CD8-positive, alpha-beta memory T cell (primary cell): ENCODE measurements at regions of chr2 and their contacts with region 1.

Region 1: GRCh38 chr2:177263451-177264208 is 897 bp downstream of the NFE2L2 start:
- DNase-seq: peak; percentile 93 to 96 (median 94)
- H3K4me3 ChIP-seq: peak overlapping the region; percentile 85
- H3K4me3 Mint-ChIP-seq: peak overlapping the region; percentile 89 to 99 (median 95)
- H3K27ac ChIP-seq: peak overlapping the region; percentile 99
- H3K27ac Mint-ChIP-seq: peak overlapping the region; percentile 95 to 100 (median 99)
- H3K4me1 ChIP-seq: peaks cover 47% of the 10 kb centered on the region
- H3K4me1 Mint-ChIP-seq: peaks cover 49 to 64% (median 57%) of the 10 kb centered on the region in 3 donors
- H3K27me3 ChIP-seq: no peaks in the 10 kb centered on the region
- H3K27me3 Mint-ChIP-seq: peaks cover 0 to 1% of the 10 kb centered on the region in 2 donors

Region 2: GRCh38 chr2:177164584-177165052 is 99.0 kb before region 1 on chr2:
- CTCF ChIA-PET with region 1: interaction called, 113 read pairs
- POLR2A ChIA-PET with region 1: interaction called, 84 read pairs
- DNase-seq: peak; percentile 65 to 85 (median 72)
- H3K4me3 ChIP-seq: peak overlapping the region; percentile 47
- H3K4me3 Mint-ChIP-seq: no peak overlapping the region
- H3K27ac ChIP-seq: peak overlapping the region; percentile 32
- H3K27ac Mint-ChIP-seq: no peak overlapping the region
- H3K4me1 ChIP-seq: peaks cover 18% of the 10 kb centered on the region
- H3K4me1 Mint-ChIP-seq: peaks cover 6 to 16% (median 16%) of the 10 kb centered on the region in 3 donors
- H3K27me3 ChIP-seq: no peaks in the 10 kb centered on the region
- H3K27me3 Mint-ChIP-seq: peaks cover 0 to 2% of the 10 kb centered on the region in 2 donors

Region 3: DNA sequence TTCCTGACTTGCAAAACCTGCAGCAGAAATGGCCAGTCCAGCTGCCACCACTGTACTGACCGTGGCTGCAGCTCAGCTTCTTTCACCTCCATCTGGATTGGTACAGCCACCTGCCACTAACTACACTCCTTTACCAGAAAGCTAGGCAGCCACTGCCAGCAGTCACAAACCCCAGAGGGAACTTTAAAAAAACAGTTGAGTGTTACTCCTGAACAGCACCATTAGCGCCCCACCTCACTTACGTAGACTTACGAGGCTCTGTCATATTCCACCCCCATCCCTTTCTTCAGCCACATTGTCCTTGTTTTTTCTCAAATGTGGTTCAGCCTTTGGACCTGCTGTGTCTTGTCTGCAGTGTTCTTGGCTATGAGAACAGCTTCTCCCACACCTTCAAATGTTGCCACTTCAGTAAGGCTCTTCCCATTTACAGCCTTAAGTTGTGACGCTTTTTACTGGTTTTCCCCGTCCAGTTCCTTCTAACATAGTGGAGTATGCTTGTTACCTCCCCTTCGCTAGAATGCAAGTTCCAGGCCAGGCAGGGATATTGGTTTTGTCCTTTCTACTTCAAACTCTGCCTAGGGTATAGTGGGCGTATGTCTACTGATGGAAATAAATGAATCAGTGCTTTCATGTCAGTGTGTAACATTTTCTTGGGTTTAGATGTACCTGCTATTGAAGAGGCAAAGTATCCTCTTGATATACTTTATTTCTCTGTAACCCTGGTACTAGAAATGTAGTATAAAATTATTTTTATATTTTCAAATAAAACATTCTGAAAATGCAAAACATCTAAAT is 34.0 kb before region 1 on chr2:
- CTCF ChIA-PET with region 1: interaction called, 38 read pairs
- POLR2A ChIA-PET with region 1: interaction called, 16 read pairs
- DNase-seq: no peak
- H3K4me3 ChIP-seq: no peak overlapping the region
- H3K4me3 Mint-ChIP-seq: peak overlapping the region in 1 of 7 donors; percentile 28
- H3K27ac ChIP-seq: no peak overlapping the region
- H3K27ac Mint-ChIP-seq: peak overlapping the region in 7 of 8 donors; percentile 44 to 94 (median 69)
- H3K4me1 ChIP-seq: no peaks in the 10 kb centered on the region
- H3K4me1 Mint-ChIP-seq: peaks cover 34 to 64% (median 51%) of the 10 kb centered on the region in 3 donors
- H3K27me3 ChIP-seq: no peaks in the 10 kb centered on the region
- H3K27me3 Mint-ChIP-seq: no peaks in the 10 kb centered on the region

Region 4: DNA sequence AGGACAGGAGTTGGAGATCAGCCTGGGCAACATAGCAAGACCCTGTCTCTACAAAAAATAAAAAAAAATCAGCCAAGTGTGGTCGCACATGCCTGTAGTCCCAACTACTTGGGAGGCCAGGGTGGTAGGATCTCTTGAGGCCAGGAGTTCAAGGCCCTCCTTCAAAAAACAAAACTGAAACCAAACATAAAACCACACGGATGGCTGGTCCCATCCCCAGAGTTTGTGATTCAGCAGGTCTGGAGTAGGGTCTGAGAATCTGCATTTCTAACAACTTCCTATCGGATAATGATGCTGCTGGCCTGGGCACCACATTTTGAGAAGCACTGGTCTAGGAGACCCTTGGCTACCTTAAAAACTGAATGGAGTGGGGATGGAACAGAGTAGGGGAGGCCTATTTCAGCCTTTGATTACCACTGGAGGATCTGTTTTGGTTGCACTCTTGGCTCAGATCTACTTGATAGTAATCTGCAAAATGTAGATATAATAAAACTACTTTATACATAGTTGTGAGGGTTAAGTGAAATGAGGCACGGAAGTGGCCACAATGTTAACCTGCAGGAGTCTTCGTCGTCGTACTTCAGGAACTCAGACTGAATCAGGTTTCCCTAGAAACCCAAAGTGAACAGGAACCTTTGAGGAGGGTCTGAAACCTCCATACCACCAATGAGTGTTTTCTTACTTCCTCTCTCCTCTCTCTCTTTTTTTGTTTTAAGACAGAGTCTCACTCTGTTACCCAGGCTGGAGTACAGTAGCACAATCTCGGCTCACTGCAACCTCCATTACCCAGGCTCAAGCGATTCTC is 26.4 kb after region 1 on chr2:
- CTCF ChIA-PET with region 1: interaction called, 37 read pairs
- POLR2A ChIA-PET with region 1: interaction called, 4 read pairs
- DNase-seq: peak in 1 of 5 donors; percentile 36
- H3K4me3 ChIP-seq: peak overlapping the region; percentile 17
- H3K4me3 Mint-ChIP-seq: peak overlapping the region in 6 of 7 donors; percentile 57 to 83 (median 76)
- H3K27ac ChIP-seq: no peak overlapping the region
- H3K27ac Mint-ChIP-seq: peak overlapping the region; percentile 13 to 93 (median 86)
- H3K4me1 ChIP-seq: peaks cover 15% of the 10 kb centered on the region
- H3K4me1 Mint-ChIP-seq: peaks cover 11 to 20% (median 12%) of the 10 kb centered on the region in 3 donors
- H3K27me3 ChIP-seq: no peaks in the 10 kb centered on the region
- H3K27me3 Mint-ChIP-seq: peaks cover 0 to 5% of the 10 kb centered on the region in 2 donors

Region 5: GRCh38 chr2:177314194-177314593 is 50.6 kb after region 1 on chr2:
- CTCF ChIA-PET with region 1: interaction called, 14 read pairs
- POLR2A ChIA-PET with region 1: interaction called, 18 read pairs
- DNase-seq: no peak
- H3K4me3 ChIP-seq: no peak overlapping the region
- H3K4me3 Mint-ChIP-seq: no peak overlapping the region
- H3K27ac ChIP-seq: no peak overlapping the region
- H3K27ac Mint-ChIP-seq: no peak overlapping the region
- H3K4me1 ChIP-seq: peaks cover 21% of the 10 kb centered on the region
- H3K4me1 Mint-ChIP-seq: peaks cover 14 to 18% (median 18%) of the 10 kb centered on the region in 3 donors
- H3K27me3 ChIP-seq: no peaks in the 10 kb centered on the region
- H3K27me3 Mint-ChIP-seq: no peaks in the 10 kb centered on the region

Region 6: DNA sequence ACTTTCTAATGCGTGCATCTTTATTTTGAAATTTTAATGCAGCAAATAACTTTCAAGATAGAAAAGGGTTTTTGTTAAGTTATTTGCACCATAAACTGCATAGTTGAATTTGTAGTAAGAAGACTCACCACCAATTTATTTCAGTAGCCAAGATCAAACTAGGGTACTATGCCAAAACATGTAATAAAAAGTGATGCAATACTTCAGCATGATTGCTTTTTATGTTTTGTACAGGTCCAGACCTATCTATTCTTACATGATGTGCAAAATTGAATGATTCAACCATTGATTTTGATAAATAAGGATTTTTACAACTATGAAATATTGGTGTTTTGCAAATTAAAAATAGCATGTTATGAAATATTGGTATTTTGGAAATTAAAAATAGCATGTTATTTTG is 155.6 kb after region 1 on chr2:
- CTCF ChIA-PET with region 1: interaction called, 16 read pairs
- POLR2A ChIA-PET with region 1: no interaction called
- DNase-seq: no peak
- H3K4me3 ChIP-seq: no peak overlapping the region
- H3K4me3 Mint-ChIP-seq: no peak overlapping the region
- H3K27ac ChIP-seq: no peak overlapping the region
- H3K27ac Mint-ChIP-seq: peak overlapping the region in 1 of 8 donors; percentile 33
- H3K4me1 ChIP-seq: no peaks in the 10 kb centered on the region
- H3K4me1 Mint-ChIP-seq: peaks cover 24 to 56% (median 49%) of the 10 kb centered on the region in 3 donors
- H3K27me3 ChIP-seq: no peaks in the 10 kb centered on the region
- H3K27me3 Mint-ChIP-seq: no peaks in the 10 kb centered on the region